CD8-positive, alpha-beta memory T cell (primary cell): ENCODE measurements at regions of chr1 and their contacts with region 1.

Region 1: DNA sequence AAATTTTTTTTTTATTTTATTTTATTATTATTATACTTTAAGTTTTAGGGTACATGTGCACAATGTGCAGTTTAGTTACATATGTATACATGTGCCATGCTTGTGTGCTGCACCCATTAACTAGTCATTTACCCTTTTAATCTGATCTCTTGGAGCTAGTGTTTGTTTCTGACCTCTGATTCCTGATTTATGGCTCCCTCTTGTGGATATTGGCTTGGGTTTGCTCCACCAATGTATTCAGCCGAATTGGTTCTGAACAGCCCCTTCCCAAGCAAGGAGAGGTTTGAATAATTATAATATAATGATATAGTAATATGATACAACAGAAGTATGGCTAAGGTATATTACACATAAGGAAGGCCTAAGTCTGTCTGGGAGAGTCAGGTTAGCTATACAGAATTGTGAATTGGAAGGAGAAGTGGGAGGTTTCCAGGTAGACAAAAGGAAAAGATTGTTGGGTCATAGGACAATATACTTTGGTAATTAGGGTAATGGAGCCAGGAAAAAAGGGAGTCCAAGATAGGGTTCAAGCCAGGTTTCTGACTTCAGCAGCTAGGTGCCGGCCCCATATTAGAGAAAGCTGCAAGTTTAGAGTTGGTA is 53.1 kb upstream of the HMCN1 start:
- DNase-seq: peak in 2 of 5 donors; percentile 17 to 33
- H3K4me3 ChIP-seq: no peak overlapping the region
- H3K4me3 Mint-ChIP-seq: no peak overlapping the region
- H3K27ac ChIP-seq: no peak overlapping the region
- H3K27ac Mint-ChIP-seq: no peak overlapping the region
- H3K4me1 ChIP-seq: peaks cover 15% of the 10 kb centered on the region
- H3K4me1 Mint-ChIP-seq: peaks cover 17 to 24% (median 22%) of the 10 kb centered on the region in 3 donors
- H3K27me3 ChIP-seq: no peaks in the 10 kb centered on the region
- H3K27me3 Mint-ChIP-seq: peaks cover 2 to 3% of the 10 kb centered on the region in 2 donors

Region 2: DNA sequence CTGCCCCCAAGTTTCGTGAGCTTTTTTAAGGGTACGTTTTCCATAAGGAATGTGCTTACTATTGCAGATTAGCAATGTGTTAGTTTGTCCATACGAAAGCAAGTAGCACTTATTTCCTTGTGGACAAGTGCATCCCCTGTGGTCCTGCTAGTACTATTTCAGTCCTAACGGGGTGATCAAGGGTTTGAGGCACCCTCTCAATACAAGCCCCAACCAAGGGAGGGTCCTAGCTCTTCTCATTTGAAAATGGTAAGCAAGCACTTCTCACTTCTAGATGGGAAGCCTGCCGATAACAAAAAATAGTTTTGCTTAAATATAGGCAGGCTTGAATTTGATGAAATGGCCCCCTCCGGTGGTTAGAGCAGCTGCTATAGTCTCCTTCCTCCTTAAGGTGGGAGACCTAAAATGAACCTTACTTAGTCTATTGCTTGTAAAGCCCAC is 10.9 kb before region 1 on chr1:
- CTCF ChIA-PET with region 1: interaction called, 11 read pairs
- POLR2A ChIA-PET with region 1: no interaction called
- DNase-seq: peak; percentile 19 to 68 (median 41)
- H3K4me3 ChIP-seq: no peak overlapping the region
- H3K4me3 Mint-ChIP-seq: no peak overlapping the region
- H3K27ac ChIP-seq: no peak overlapping the region
- H3K27ac Mint-ChIP-seq: peak overlapping the region in 2 of 8 donors; percentile 12 to 28
- H3K4me1 ChIP-seq: peaks cover 13% of the 10 kb centered on the region
- H3K4me1 Mint-ChIP-seq: peaks cover 19 to 31% (median 23%) of the 10 kb centered on the region in 3 donors
- H3K27me3 ChIP-seq: no peaks in the 10 kb centered on the region
- H3K27me3 Mint-ChIP-seq: no peaks in the 10 kb centered on the region

Region 3: DNA sequence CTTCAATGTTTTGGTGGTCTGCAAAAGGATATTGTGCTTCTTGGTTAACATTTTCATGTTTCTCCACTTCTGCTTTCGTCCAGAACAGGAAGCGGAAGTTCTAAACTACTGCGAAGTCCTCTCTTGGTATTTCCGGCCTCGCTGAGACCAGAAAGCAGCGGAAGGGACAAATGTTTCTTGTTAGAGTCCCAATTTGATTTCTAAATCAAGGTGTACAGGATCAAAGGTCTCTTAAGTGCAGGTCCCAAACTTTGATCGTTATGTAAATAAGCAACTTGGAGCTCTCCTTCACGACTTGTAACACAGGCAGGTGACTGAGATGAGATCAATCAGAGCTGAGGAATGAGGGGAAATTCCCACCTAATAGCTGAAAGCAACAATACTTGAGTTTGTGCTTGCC is 12.9 kb after region 1 on chr1:
- CTCF ChIA-PET with region 1: interaction called, 14 read pairs
- POLR2A ChIA-PET with region 1: interaction called, 4 read pairs
- DNase-seq: peak in 2 of 5 donors; percentile 11 to 30
- H3K4me3 ChIP-seq: peak overlapping the region; percentile 53
- H3K4me3 Mint-ChIP-seq: peak overlapping the region; percentile 68 to 82 (median 78)
- H3K27ac ChIP-seq: no peak overlapping the region
- H3K27ac Mint-ChIP-seq: peak overlapping the region; percentile 53 to 91 (median 86)
- H3K4me1 ChIP-seq: peaks cover 14% of the 10 kb centered on the region
- H3K4me1 Mint-ChIP-seq: peaks cover 12 to 22% (median 17%) of the 10 kb centered on the region in 3 donors
- H3K27me3 ChIP-seq: no peaks in the 10 kb centered on the region
- H3K27me3 Mint-ChIP-seq: peaks cover 8 to 38% of the 10 kb centered on the region in 2 donors

Region 4: GRCh38 chr1:185869590-185869989 is 188.5 kb after region 1 on chr1:
- CTCF ChIA-PET with region 1: no interaction called
- POLR2A ChIA-PET with region 1: no interaction called
- DNase-seq: no peak
- H3K4me3 ChIP-seq: no peak overlapping the region
- H3K4me3 Mint-ChIP-seq: no peak overlapping the region
- H3K27ac ChIP-seq: no peak overlapping the region
- H3K27ac Mint-ChIP-seq: no peak overlapping the region
- H3K4me1 ChIP-seq: no peaks in the 10 kb centered on the region
- H3K4me1 Mint-ChIP-seq: no peaks in the 10 kb centered on the region
- H3K27me3 ChIP-seq: no peaks in the 10 kb centered on the region
- H3K27me3 Mint-ChIP-seq: peaks cover 4 to 5% of the 10 kb centered on the region in 2 donors

Region 5: DNA sequence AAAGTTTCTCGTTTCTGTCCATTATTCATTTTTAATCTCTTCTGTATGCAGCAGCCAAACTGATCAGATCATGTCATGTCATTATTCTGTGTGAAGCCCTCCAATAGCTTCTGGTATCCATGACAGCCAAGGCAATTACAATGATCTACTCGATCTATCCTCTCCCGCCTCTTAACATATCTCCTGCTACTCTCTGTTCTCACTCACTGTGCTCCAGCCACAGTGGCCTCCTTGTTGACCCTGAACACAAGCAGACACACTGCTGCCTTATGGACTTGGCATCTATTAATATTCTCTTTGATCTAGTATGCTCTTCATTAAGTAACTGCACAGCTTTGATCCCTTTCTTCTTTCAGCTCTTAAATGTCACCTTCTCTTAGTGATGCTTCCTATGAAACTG is 634.4 kb after region 1 on chr1:
- CTCF ChIA-PET with region 1: no interaction called
- POLR2A ChIA-PET with region 1: no interaction called
- DNase-seq: no peak
- H3K4me3 ChIP-seq: no peak overlapping the region
- H3K4me3 Mint-ChIP-seq: no peak overlapping the region
- H3K27ac ChIP-seq: no peak overlapping the region
- H3K27ac Mint-ChIP-seq: peak overlapping the region in 2 of 8 donors; percentile 59 to 90
- H3K4me1 ChIP-seq: no peaks in the 10 kb centered on the region
- H3K4me1 Mint-ChIP-seq: peaks cover 0 to 25% (median 2%) of the 10 kb centered on the region in 3 donors
- H3K27me3 ChIP-seq: no peaks in the 10 kb centered on the region
- H3K27me3 Mint-ChIP-seq: no peaks in the 10 kb centered on the region